ENCODE measurements at regions of chr1 and their contacts with region 1.

Region 1: DNA sequence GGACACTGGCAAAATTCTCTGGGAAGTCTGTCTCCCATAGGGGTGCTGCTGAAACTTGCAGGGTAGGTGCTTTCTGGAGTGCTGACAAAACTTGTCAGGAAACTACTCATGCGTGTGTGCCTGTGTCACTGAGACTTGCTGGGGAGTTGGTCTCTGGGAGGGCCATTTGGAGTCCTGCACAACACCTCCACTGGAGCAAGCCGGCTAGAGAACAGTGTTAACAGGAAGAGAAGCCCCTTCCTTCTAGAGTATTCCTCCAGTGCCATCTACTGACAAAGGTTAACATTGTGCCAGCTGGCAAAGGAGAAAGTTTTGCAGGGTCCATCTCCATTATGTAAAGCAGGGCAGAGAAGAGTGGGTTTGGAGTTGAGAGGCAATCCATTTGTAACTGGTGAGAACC is 30.0 kb downstream of the ZMYM4 start:
- DNase-seq: no peak
- H3K4me3 ChIP-seq: no peak overlapping the region
- H3K27ac ChIP-seq: no peak overlapping the region
- H3K4me1 ChIP-seq: peaks cover 9 to 24% (median 19%) of the 10 kb centered on the region in 4 donors
- H3K27me3 ChIP-seq: no peaks in the 10 kb centered on the region
- CTCF ChIP-seq: peak; percentile 13 to 44 (median 34)
- EP300 ChIP-seq: no peak
- POLR2A ChIP-seq: no peak

Region 2: GRCh38 chr1:35202048-35202719 is 96.3 kb before region 1 on chr1:
- intact Hi-C with region 1: loop called (anchors 5 kb)
- DNase-seq: no peak
- H3K4me3 ChIP-seq: peak overlapping the region in 1 of 4 donors; percentile 29
- H3K27ac ChIP-seq: no peak overlapping the region
- H3K4me1 ChIP-seq: peaks cover 0 to 8% (median 4%) of the 10 kb centered on the region in 4 donors
- H3K27me3 ChIP-seq: no peaks in the 10 kb centered on the region
- CTCF ChIP-seq: peak; percentile 82 to 88 (median 85)
- EP300 ChIP-seq: no peak
- POLR2A ChIP-seq: no peak

Region 3: DNA sequence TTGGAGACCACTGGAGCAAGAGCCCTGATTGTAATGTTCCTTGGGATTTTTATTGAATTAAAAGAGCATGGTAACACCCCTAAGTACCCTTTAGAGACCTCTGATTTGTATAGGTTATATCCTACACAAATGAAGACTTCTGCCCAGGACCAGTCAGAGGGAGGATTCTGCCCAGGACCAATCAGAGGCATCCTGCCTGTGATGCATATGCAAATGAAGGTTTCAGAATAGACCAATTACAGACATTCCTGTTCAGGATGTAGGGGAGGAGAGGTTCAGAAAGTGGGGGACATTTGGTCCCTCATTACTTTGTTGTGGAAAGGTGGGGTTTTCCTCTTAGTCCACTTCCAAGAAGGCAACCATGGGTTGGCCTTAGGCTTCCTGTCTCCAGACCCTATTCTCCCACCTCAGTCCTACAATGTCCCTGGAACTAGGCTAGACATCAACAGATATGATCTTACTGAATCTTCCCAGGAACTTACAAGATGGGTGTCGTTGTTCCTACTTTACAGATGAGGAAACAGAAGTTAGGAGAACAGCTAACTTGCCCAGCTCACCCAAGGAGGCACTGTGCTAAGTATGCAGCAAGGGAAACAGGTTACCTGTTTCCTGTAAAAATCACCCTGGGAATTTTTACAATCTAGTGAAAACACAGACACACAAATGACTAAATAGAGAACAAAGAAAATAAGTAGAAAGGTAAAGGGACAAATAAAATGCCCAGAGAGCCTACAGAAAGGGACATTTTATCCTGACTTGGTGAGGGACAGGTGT is 68.7 kb before region 1 on chr1:
- intact Hi-C with region 1: no loop called
- DNase-seq: no peak
- H3K4me3 ChIP-seq: no peak overlapping the region
- H3K27ac ChIP-seq: no peak overlapping the region
- H3K4me1 ChIP-seq: no peaks in the 10 kb centered on the region
- H3K27me3 ChIP-seq: no peaks in the 10 kb centered on the region
- CTCF ChIP-seq: no peak
- EP300 ChIP-seq: no peak
- POLR2A ChIP-seq: no peak

Measured in esophagus muscularis mucosa (tissue), 4 donors.